CD8-positive, alpha-beta T cell (primary cell): ENCODE measurements at regions of chr2 and their contacts with region 1.

Region 1: DNA sequence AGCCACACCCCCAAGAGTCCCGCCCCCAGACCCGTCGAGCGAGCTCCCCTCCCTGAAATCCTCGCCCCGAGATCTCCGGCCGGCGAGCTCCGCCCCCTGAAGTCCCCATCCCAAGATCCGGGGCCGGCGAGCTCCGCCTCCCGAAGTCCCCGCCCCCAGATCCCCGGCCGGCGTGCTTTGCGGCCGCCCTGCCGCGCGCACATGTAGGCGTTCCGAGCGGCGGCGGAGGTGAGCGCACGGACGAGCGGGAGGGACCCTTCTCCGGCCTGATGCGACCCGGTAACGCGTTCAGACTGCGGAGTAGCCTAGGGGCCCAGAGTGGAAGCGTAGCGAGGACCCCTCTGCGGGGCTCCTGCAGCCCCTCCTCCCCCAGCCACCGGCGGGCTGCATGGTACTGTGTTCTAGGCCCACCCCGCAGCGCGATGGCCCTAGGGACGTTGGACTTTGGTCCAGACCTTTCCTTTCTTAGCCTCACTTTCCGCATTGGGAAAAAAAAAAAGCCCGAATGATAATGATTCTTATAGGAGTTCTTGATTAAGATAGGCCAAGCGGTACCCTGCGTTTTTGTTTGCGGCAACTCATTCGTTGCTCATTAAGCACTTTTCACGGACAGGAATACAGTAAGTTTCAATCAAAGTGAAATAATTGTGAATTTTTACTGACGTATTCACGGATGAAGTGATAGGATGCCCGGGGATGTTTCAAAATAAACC is at the start of gene TMEM177:
- DNase-seq: peak; percentile 77 to 93 (median 87)
- ATAC-seq: peak; percentile 86
- H3K4me3 ChIP-seq: peak within 1 kb of the TSS; percentile 71 to 90
- H3K4me3 Mint-ChIP-seq: peak within 1 kb of the TSS; percentile 89
- H3K27ac ChIP-seq: peak within 1 kb of the TSS; percentile 59 to 69
- H3K27ac Mint-ChIP-seq: peak within 1 kb of the TSS; percentile 92
- H3K4me1 ChIP-seq: peaks cover 18% of the 10 kb centered on the region
- H3K4me1 Mint-ChIP-seq: peaks cover 27% of the 10 kb centered on the region
- H3K27me3 ChIP-seq: no peaks in the 10 kb centered on the region
- H3K27me3 Mint-ChIP-seq: no peaks in the 10 kb centered on the region
- CTCF ChIP-seq: no peak
- total RNA-seq, gene TMEM177: 2.1 to 3.8 TPM

Region 2: GRCh38 chr2:118013724-118014491 is 1665.2 kb before region 1 on chr2 and contains the start of gene CCDC93:
- CTCF ChIA-PET with region 1: interaction called, 3 read pairs
- POLR2A ChIA-PET with region 1: no interaction called
- intact Hi-C with region 1: loop called in 1 of 2 experiments (anchors 2 kb)
- DNase-seq: peak; percentile 73 to 94 (median 86)
- ATAC-seq: peak; percentile 85
- H3K4me3 ChIP-seq: peak within 1 kb of the TSS; percentile 73 to 88
- H3K4me3 Mint-ChIP-seq: peak within 1 kb of the TSS; percentile 95
- H3K27ac ChIP-seq: peak within 1 kb of the TSS; percentile 93 to 95
- H3K27ac Mint-ChIP-seq: peak within 1 kb of the TSS; percentile 92
- H3K4me1 ChIP-seq: peaks cover 27% of the 10 kb centered on the region
- H3K4me1 Mint-ChIP-seq: peaks cover 47% of the 10 kb centered on the region
- H3K27me3 ChIP-seq: no peaks in the 10 kb centered on the region
- H3K27me3 Mint-ChIP-seq: peaks cover 3% of the 10 kb centered on the region
- CTCF ChIP-seq: no peak
- total RNA-seq, gene CCDC93: 84.4 to 85.3 TPM

Region 3: DNA sequence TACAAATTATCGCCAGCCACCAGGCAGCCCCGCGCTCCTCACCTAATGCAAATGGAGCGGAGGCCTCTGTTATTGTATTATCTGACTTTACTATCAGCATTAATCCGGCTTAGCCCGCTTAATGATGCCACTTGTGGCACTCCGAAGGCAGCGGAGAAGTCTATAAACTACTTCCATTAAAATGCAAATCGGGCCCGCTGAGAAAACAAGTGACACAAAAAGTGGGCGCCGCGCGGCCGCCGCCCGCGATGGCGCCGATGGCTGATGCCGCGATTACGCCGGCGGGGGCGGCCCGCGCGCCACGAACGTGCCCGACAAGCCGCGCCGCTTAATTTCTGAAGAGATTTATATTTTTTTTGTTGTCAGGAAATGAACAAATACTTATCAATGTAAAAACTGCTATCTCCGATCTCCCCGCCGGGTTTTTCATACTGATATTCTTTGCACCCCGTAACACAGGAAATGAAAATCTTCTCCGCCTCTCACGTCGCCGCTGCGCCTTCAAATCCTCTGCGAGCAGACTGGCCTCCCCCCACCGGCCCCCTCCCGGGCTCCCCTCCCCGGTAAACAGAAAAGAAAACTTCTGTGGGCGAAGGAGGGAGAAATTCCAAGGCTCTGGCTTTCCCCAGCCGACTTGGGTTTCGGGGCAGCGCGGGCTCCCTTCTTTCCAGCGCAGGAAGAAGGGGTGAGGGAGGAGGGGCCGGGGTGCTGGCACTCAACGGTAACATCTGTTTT is 1369.0 kb before region 1 on chr2:
- CTCF ChIA-PET with region 1: no interaction called
- POLR2A ChIA-PET with region 1: no interaction called
- intact Hi-C with region 1: loop called in 1 of 2 experiments (anchors 5 kb)
- DNase-seq: peak; percentile 22 to 77 (median 56)
- ATAC-seq: peak; percentile 75
- H3K4me3 ChIP-seq: peak overlapping the region; percentile 66 to 69
- H3K4me3 Mint-ChIP-seq: peak overlapping the region; percentile 88
- H3K27ac ChIP-seq: peak overlapping the region; percentile 81 to 88
- H3K27ac Mint-ChIP-seq: peak overlapping the region; percentile 97
- H3K4me1 ChIP-seq: peaks cover 8% of the 10 kb centered on the region
- H3K4me1 Mint-ChIP-seq: peaks cover 5% of the 10 kb centered on the region
- H3K27me3 ChIP-seq: no peaks in the 10 kb centered on the region
- H3K27me3 Mint-ChIP-seq: peaks cover 4% of the 10 kb centered on the region
- CTCF ChIP-seq: no peak

Region 4: GRCh38 chr2:119283860-119284331 is 395.3 kb before region 1 on chr2:
- CTCF ChIA-PET with region 1: no interaction called
- POLR2A ChIA-PET with region 1: no interaction called
- intact Hi-C with region 1: no loop called
- DNase-seq: peak in 1 of 9 experiments; percentile 31
- ATAC-seq: no peak
- H3K4me3 ChIP-seq: no peak overlapping the region
- H3K4me3 Mint-ChIP-seq: no peak overlapping the region
- H3K27ac ChIP-seq: no peak overlapping the region
- H3K27ac Mint-ChIP-seq: no peak overlapping the region
- H3K4me1 ChIP-seq: no peaks in the 10 kb centered on the region
- H3K4me1 Mint-ChIP-seq: no peaks in the 10 kb centered on the region
- H3K27me3 ChIP-seq: no peaks in the 10 kb centered on the region
- H3K27me3 Mint-ChIP-seq: no peaks in the 10 kb centered on the region
- CTCF ChIP-seq: no peak

Region 5: DNA sequence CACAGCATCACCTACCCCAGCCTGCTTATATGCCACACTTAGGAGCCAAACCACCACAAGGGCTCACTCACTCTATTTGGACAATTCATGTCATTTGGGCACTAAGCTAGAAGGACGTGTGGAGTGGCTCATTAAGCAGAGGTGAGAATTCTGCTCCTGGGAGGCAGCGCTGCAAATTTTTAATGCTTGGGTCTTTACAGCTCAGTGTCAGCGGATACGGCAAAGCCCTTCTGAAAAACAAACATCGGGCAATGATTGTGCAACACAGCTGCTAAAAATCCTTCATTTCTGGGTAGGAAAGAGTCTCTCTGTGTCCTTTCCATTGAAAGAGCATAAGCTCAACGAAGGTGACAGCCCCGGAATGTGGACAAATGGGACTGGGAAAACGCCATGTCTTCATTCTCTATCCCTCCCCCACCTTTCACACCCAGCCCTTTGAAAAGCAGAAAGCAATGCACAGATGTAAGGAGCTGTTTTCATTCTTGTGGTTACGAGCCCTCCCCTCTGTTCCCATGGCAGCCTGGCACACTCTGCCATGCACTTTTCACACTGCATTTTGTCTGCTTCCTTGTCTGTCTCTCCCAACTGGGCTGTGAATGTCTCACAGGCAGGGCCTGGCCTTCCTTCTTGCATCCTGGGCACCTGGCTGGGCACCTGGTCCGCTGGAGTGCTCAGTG is 15.8 kb after region 1 on chr2:
- CTCF ChIA-PET with region 1: no interaction called
- POLR2A ChIA-PET with region 1: interaction called, 18 read pairs
- intact Hi-C with region 1: no loop called
- DNase-seq: peak in 5 of 9 experiments; percentile 20 to 62 (median 31)
- ATAC-seq: peak; percentile 65
- H3K4me3 ChIP-seq: peak overlapping the region; percentile 5 to 9
- H3K4me3 Mint-ChIP-seq: peak overlapping the region; percentile 81
- H3K27ac ChIP-seq: no peak overlapping the region
- H3K27ac Mint-ChIP-seq: peak overlapping the region; percentile 76
- H3K4me1 ChIP-seq: peaks cover 48% of the 10 kb centered on the region
- H3K4me1 Mint-ChIP-seq: peaks cover 47% of the 10 kb centered on the region
- H3K27me3 ChIP-seq: no peaks in the 10 kb centered on the region
- H3K27me3 Mint-ChIP-seq: peaks cover 4% of the 10 kb centered on the region
- CTCF ChIP-seq: no peak

Region 6: GRCh38 chr2:120012771-120013596 is 333.8 kb after region 1 on chr2 and contains the start of gene EPB41L5:
- CTCF ChIA-PET with region 1: no interaction called
- POLR2A ChIA-PET with region 1: interaction called, 3 read pairs
- intact Hi-C with region 1: loop called (anchors 2 to 5 kb)
- DNase-seq: peak; percentile 50 to 88 (median 80)
- ATAC-seq: peak; percentile 92
- H3K4me3 ChIP-seq: peak within 1 kb of the TSS; percentile 68 to 82
- H3K4me3 Mint-ChIP-seq: peak within 1 kb of the TSS; percentile 85
- H3K27ac ChIP-seq: peak within 1 kb of the TSS; percentile 32 to 44
- H3K27ac Mint-ChIP-seq: peak within 1 kb of the TSS; percentile 62
- H3K4me1 ChIP-seq: peaks cover 18% of the 10 kb centered on the region
- H3K4me1 Mint-ChIP-seq: peaks cover 26% of the 10 kb centered on the region
- H3K27me3 ChIP-seq: no peaks in the 10 kb centered on the region
- H3K27me3 Mint-ChIP-seq: no peaks in the 10 kb centered on the region
- CTCF ChIP-seq: no peak
- total RNA-seq, gene EPB41L5: 5.1 to 5.8 TPM

Region 7: GRCh38 chr2:120223034-120223912 is 544.1 kb after region 1 on chr2 and contains the start of gene TMEM185B:
- CTCF ChIA-PET with region 1: no interaction called
- POLR2A ChIA-PET with region 1: no interaction called
- intact Hi-C with region 1: loop called (anchors 2 to 5 kb)
- DNase-seq: peak; percentile 81 to 91 (median 87)
- ATAC-seq: peak; percentile 95
- H3K4me3 ChIP-seq: peak within 1 kb of the TSS; percentile 80 to 87
- H3K4me3 Mint-ChIP-seq: peak within 1 kb of the TSS; percentile 87
- H3K27ac ChIP-seq: peak within 1 kb of the TSS; percentile 90 to 95
- H3K27ac Mint-ChIP-seq: peak within 1 kb of the TSS; percentile 93
- H3K4me1 ChIP-seq: peaks cover 36% of the 10 kb centered on the region
- H3K4me1 Mint-ChIP-seq: peaks cover 60% of the 10 kb centered on the region
- H3K27me3 ChIP-seq: no peaks in the 10 kb centered on the region
- H3K27me3 Mint-ChIP-seq: no peaks in the 10 kb centered on the region
- CTCF ChIP-seq: no peak
- total RNA-seq, gene TMEM185B: 21.3 to 23.5 TPM

Region 8: GRCh38 chr2:120252225-120253021 is 573.3 kb after region 1 on chr2 and contains the start of gene RALB:
- CTCF ChIA-PET with region 1: no interaction called
- POLR2A ChIA-PET with region 1: no interaction called
- intact Hi-C with region 1: loop called (anchors 1 kb)
- DNase-seq: peak; percentile 96 to 99 (median 98)
- ATAC-seq: peak; percentile 95
- H3K4me3 ChIP-seq: peak within 1 kb of the TSS; percentile 87 to 100
- H3K4me3 Mint-ChIP-seq: peak within 1 kb of the TSS; percentile 99
- H3K27ac ChIP-seq: peak within 1 kb of the TSS; percentile 63 to 85
- H3K27ac Mint-ChIP-seq: peak within 1 kb of the TSS; percentile 94
- H3K4me1 ChIP-seq: peaks cover 18% of the 10 kb centered on the region
- H3K4me1 Mint-ChIP-seq: peaks cover 34% of the 10 kb centered on the region
- H3K27me3 ChIP-seq: no peaks in the 10 kb centered on the region
- H3K27me3 Mint-ChIP-seq: peaks cover 5% of the 10 kb centered on the region
- CTCF ChIP-seq: no peak
- total RNA-seq, gene RALB: 3.1 to 3.2 TPM

Region 9: GRCh38 chr2:120470041-120470965 is 791.1 kb after region 1 on chr2:
- CTCF ChIA-PET with region 1: no interaction called
- POLR2A ChIA-PET with region 1: no interaction called
- intact Hi-C with region 1: no loop called
- DNase-seq: no peak
- ATAC-seq: no peak
- H3K4me3 ChIP-seq: no peak overlapping the region
- H3K4me3 Mint-ChIP-seq: no peak overlapping the region
- H3K27ac ChIP-seq: no peak overlapping the region
- H3K27ac Mint-ChIP-seq: no peak overlapping the region
- H3K4me1 ChIP-seq: no peaks in the 10 kb centered on the region
- H3K4me1 Mint-ChIP-seq: no peaks in the 10 kb centered on the region
- H3K27me3 ChIP-seq: no peaks in the 10 kb centered on the region
- H3K27me3 Mint-ChIP-seq: no peaks in the 10 kb centered on the region
- CTCF ChIP-seq: no peak